Activated CD8-positive, alpha-beta T cell treated with anti-CD3 and anti-CD28 coated beads, Interleukin-2, amount 10 ng/mL, durations not matched to agents 7 days and 5 days (primary cell): ENCODE measurements at regions of chr3 and their contacts with region 1.

Region 1: DNA sequence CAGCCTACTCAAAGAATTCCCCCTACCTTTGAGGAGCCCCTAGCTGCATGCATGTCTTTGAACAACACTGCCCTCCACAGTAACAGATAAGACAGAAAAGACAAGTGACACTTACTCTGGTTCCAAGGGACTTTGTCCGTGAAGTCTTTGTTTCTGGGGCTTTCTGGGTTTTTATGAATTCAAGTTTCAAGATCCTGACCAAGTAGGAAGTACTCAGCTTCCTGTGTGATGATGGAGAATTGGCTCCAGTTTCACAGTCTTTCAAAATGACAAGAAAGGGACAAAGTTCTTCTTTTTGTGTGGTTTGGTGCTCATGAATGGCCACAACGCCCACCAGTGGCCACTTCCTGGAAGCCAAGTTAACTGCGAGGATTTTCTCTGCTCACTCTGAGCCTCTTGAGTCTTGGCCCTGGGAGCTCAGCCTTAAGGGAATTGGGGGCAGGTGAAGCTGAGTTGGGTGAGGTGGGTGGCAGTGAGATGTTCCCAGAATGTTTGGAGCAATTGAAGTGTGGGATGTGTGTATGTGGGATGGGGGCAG is at the start of gene CCR1:
- DNase-seq: peak; percentile 85
- ATAC-seq: peak; percentile 69
- H3K4me3 Mint-ChIP-seq: peak within 1 kb of the TSS; percentile 87
- H3K27ac Mint-ChIP-seq: peak within 1 kb of the TSS; percentile 95
- H3K4me1 Mint-ChIP-seq: peaks cover 73% of the 10 kb centered on the region
- H3K27me3 Mint-ChIP-seq: no peaks in the 10 kb centered on the region
- total RNA-seq, gene CCR1: 41.4 to 41.5 TPM

Region 2: GRCh38 chr3:46089237-46090011 is 118.8 kb before region 1 on chr3:
- CTCF ChIA-PET with region 1: interaction called, 150 read pairs
- POLR2A ChIA-PET with region 1: no interaction called
- DNase-seq: no peak
- ATAC-seq: peak; percentile 37
- H3K4me3 Mint-ChIP-seq: no peak overlapping the region
- H3K27ac Mint-ChIP-seq: peak overlapping the region; percentile 53
- H3K4me1 Mint-ChIP-seq: peaks cover 75% of the 10 kb centered on the region
- H3K27me3 Mint-ChIP-seq: no peaks in the 10 kb centered on the region

Region 3: DNA sequence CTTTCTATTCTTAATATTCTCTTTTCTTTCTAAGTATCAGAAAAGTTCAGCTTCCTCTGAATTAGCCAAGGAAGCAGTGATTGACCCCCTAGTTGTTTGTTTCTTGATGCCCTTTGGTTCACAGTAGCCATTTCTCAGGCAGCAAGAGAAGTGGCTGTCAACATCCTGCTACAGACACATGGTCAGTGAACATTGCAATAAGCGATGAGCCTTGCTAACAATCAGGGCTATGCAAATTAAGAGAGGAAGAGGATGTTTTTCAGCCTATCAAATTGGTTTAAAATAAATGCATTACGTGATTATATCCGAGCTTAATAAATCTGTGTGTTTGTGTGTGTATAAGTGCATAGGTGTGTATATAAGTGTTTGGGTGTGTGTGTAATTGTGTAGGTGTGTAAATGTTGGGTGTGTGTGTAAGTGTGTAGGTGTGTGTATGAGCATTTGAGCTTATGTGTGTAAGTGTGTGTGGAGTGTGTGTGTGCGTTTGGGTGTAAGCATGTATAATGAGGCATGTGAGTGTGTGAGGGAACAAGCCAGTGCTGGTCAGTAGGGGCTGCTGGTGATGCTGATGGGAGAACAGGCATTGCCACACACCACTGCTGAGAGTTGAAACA is 102.8 kb before region 1 on chr3:
- CTCF ChIA-PET with region 1: interaction called, 62 read pairs
- POLR2A ChIA-PET with region 1: interaction called, 9 read pairs
- DNase-seq: no peak
- ATAC-seq: no peak
- H3K4me3 Mint-ChIP-seq: no peak overlapping the region
- H3K27ac Mint-ChIP-seq: peak overlapping the region; percentile 70
- H3K4me1 Mint-ChIP-seq: peaks cover 89% of the 10 kb centered on the region
- H3K27me3 Mint-ChIP-seq: no peaks in the 10 kb centered on the region

Region 4: DNA sequence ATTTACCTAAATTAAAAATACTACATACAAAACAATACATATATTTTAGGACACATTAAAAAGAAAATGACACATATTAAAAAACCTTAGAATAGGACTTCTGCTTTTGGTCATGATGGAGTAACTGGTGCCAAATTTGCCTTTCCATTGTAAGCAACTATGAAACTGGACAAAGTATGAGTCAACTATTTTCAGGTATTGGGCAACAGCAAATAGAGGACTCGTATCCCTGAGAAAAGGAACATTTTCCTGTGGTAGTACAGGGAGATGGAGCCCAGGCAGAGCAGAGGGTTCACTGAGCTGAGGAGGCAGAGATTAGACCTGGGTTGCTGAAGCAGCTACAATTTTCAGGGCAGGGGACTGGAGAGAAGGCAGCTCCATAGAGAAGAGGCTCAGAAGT is 14.8 kb before region 1 on chr3:
- CTCF ChIA-PET with region 1: interaction called, 20 read pairs
- POLR2A ChIA-PET with region 1: no interaction called
- DNase-seq: no peak
- ATAC-seq: no peak
- H3K4me3 Mint-ChIP-seq: no peak overlapping the region
- H3K27ac Mint-ChIP-seq: no peak overlapping the region
- H3K4me1 Mint-ChIP-seq: peaks cover 5% of the 10 kb centered on the region
- H3K27me3 Mint-ChIP-seq: no peaks in the 10 kb centered on the region

Region 5: GRCh38 chr3:46378426-46378942 is 170.2 kb after region 1 on chr3:
- CTCF ChIA-PET with region 1: interaction called, 371 read pairs
- POLR2A ChIA-PET with region 1: no interaction called
- DNase-seq: peak; percentile 82
- ATAC-seq: peak; percentile 50
- H3K4me3 Mint-ChIP-seq: no peak overlapping the region
- H3K27ac Mint-ChIP-seq: no peak overlapping the region
- H3K4me1 Mint-ChIP-seq: peaks cover 76% of the 10 kb centered on the region
- H3K27me3 Mint-ChIP-seq: no peaks in the 10 kb centered on the region